T-cell (primary cell): ENCODE measurements at regions of chr10 and their contacts with region 1.

Region 1: DNA sequence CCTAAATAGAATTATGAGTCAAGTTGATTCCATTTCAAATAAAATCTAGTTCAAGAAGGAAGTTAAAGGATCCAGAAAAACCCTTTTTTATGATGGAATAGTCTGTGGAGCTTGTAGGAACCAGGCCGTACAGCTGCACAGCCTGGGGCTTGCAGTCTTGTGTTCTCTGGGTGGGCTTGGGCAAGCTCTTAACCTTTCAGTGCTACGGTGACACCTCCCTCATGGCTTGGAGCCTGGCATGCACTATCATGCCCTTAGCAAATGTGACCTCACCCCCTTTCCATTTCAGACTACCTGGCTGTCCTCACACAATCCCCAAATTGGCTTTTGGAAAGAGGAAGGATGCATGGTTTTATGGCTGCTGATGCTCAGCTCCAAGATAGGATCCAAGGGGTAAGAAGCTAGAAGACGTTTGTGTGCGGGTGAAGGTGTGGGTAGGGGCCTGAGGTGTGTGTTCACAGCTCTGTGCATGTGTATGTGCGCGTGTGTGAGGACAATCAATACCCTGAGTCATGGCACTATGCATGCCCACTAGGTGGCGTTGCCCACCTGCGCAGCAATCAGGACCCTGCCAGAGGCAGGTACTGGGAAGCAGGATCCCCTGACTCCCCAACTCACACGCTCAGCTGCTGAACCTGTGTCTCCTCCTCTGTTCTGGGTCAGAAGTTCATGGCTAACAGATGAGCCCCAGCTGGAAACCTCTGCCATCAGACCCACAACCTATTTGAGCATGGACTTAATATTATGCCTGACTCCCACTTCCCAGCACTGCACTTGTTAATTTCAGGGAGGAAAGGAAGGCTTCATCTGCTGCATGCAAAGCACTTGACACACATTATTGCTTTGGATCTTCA is 113.4 kb downstream of the PTPN20 start:
- DNase-seq: peak; percentile 26 to 79 (median 54)
- ATAC-seq: peak; percentile 63 to 86 (median 80)
- H3K4me3 ChIP-seq: no peak overlapping the region
- H3K4me3 Mint-ChIP-seq: no peak overlapping the region
- H3K27ac ChIP-seq: no peak overlapping the region
- H3K27ac Mint-ChIP-seq: peak overlapping the region in 1 of 2 donors; percentile 22
- H3K4me1 ChIP-seq: peaks cover 0 to 8% of the 10 kb centered on the region in 2 experiments
- H3K4me1 Mint-ChIP-seq: peaks cover 0 to 4% (median 2%) of the 10 kb centered on the region in 3 donors
- H3K27me3 ChIP-seq: peaks cover 0 to 3% of the 10 kb centered on the region in 2 experiments
- H3K27me3 Mint-ChIP-seq: peaks cover 1 to 5% of the 10 kb centered on the region in 2 donors

Region 2: DNA sequence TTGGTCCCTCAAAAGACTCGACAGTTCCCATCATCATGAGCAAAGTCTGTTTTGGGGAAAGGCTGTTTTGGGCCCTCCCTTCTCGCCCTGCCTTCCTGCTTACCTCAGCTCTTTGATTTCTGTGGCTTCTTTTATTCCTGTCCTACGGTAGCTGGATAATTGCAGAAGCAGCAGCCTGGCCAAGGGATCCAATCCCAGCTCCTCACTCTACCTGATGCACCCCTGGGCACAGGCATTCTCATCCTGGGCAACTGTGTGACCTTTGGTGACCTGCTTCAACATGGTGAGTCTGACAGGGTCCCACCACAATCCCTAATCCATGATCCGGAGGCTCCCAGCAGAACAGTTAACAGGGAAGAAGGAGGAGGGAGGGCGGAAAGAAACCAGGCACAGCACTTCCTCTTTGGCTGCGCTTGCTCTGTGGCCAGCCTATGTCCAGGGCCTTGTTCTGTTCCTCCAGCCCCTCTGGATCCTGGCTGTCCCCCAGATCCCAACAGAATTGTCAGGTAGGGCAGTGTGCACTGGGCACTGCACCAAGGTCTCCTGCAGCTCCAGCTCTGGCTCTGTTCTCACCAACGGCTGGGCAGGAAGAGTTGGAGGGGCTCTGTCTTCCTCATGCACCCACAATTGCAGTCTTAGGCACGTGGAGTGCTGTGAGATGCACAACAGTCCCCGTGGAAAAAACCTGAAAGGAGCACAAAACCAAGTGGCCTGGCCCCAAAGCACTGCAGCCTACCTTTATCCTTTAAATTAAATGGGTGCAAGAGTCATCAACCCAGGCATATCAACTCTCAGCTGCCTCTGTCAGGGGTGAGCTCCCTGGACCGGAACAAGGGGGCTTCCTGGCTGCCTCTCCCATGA is 31.0 kb after region 1 on chr10:
- CTCF ChIA-PET with region 1: no interaction called
- POLR2A ChIA-PET with region 1: no interaction called
- DNase-seq: no peak
- ATAC-seq: no peak
- H3K4me3 ChIP-seq: no peak overlapping the region
- H3K4me3 Mint-ChIP-seq: no peak overlapping the region
- H3K27ac ChIP-seq: no peak overlapping the region
- H3K27ac Mint-ChIP-seq: no peak overlapping the region
- H3K4me1 ChIP-seq: no peaks in the 10 kb centered on the region
- H3K4me1 Mint-ChIP-seq: peaks cover 0 to 5% (median 2%) of the 10 kb centered on the region in 3 donors
- H3K27me3 ChIP-seq: peaks cover 0 to 8% of the 10 kb centered on the region in 2 experiments
- H3K27me3 Mint-ChIP-seq: peaks cover 0 to 2% of the 10 kb centered on the region in 2 donors

Region 3: DNA sequence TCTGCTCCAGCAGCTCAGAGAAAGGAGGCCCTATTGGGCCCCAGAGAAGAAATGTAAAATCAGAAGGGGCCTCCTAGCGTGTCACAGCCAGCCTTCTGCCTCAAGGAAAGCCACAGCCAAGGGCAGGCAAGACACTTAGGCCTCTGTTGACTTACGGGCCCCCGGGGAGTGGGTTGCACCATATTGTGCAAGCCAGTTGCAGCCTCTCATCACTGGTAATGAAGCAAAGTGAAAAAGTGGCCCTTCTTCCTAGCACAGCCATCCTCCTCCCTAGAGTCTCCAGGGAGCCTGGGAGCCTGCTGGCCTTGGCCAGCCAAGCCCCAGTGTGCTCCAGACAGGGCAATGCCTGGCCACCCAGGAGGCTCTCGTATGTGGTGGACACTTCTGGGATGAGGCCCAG is 219.2 kb after region 1 on chr10:
- CTCF ChIA-PET with region 1: no interaction called
- POLR2A ChIA-PET with region 1: no interaction called
- DNase-seq: no peak
- ATAC-seq: no peak
- H3K4me3 ChIP-seq: no peak overlapping the region
- H3K4me3 Mint-ChIP-seq: no peak overlapping the region
- H3K27ac ChIP-seq: no peak overlapping the region
- H3K27ac Mint-ChIP-seq: no peak overlapping the region
- H3K4me1 ChIP-seq: peaks cover 0 to 6% of the 10 kb centered on the region in 2 experiments
- H3K4me1 Mint-ChIP-seq: peaks cover 16 to 38% (median 17%) of the 10 kb centered on the region in 3 donors
- H3K27me3 ChIP-seq: peaks cover 0 to 10% of the 10 kb centered on the region in 2 experiments
- H3K27me3 Mint-ChIP-seq: no peaks in the 10 kb centered on the region

Region 4: GRCh38 chr10:47311932-47312662 is 287.5 kb after region 1 on chr10:
- CTCF ChIA-PET with region 1: interaction called, 28 to 31 read pairs
- POLR2A ChIA-PET with region 1: no interaction called
- DNase-seq: peak; percentile 62 to 88 (median 76)
- ATAC-seq: peak; percentile 74 to 83 (median 79)
- H3K4me3 ChIP-seq: peak overlapping the region in 1 of 2 donors; percentile 11
- H3K4me3 Mint-ChIP-seq: peak overlapping the region; percentile 13 to 68 (median 22)
- H3K27ac ChIP-seq: peak overlapping the region; percentile 40
- H3K27ac Mint-ChIP-seq: peak overlapping the region; percentile 86 to 91
- H3K4me1 ChIP-seq: peaks cover 6 to 39% of the 10 kb centered on the region in 2 experiments
- H3K4me1 Mint-ChIP-seq: peaks cover 32 to 39% (median 36%) of the 10 kb centered on the region in 3 donors
- H3K27me3 ChIP-seq: no peaks in the 10 kb centered on the region
- H3K27me3 Mint-ChIP-seq: no peaks in the 10 kb centered on the region